SK-N-SH (cell line): ENCODE measurements at regions of chr18 and their contacts with region 1.

Region 1: GRCh38 chr18:32439802-32440201 is 30.9 kb downstream of the GAREM1 start:
- DNase-seq: no peak
- H3K4me3 ChIP-seq: no peak overlapping the region
- H3K27ac ChIP-seq: no peak overlapping the region
- H3K4me1 ChIP-seq: peaks cover 0 to 12% of the 10 kb centered on the region in 2 experiments; a peak in 2 of 4 replicates
- H3K27me3 ChIP-seq: no peaks in the 10 kb centered on the region
- CTCF ChIP-seq: peak; percentile 46; the same call in 1 of the 2 replicates
- EP300 ChIP-seq: no peak
- RAD21 ChIP-seq: peak; percentile 57

Region 2: DNA sequence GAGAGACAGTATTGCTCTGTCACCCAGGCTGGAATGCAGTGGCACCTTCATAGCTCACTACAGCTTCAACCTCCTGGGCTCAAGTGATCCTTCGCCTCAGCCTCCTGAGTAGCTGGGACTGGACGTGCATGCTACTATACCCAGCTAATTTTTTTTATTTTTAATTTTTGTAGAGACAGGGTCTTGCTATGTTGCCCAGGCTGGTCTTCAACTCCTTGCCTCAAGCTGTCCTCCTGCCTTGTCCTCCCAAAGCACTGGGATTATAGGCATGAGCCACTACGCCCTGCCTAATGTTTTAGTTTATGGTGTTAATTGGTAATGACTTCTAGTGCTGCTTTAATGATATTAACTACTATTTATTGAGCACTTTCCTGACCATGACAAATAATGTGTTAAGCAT is 329.8 kb before region 1 on chr18:
- CTCF ChIA-PET with region 1: no interaction called
- POLR2A ChIA-PET with region 1: no interaction called
- DNase-seq: no peak
- H3K4me3 ChIP-seq: no peak overlapping the region
- H3K27ac ChIP-seq: no peak overlapping the region
- H3K4me1 ChIP-seq: no peaks in the 10 kb centered on the region
- H3K27me3 ChIP-seq: no peaks in the 10 kb centered on the region
- CTCF ChIP-seq: no peak
- EP300 ChIP-seq: no peak
- RAD21 ChIP-seq: no peak

Region 3: GRCh38 chr18:32450874-32451273 is 11.1 kb after region 1 on chr18:
- CTCF ChIA-PET with region 1: interaction called, 15 read pairs
- POLR2A ChIA-PET with region 1: no interaction called
- DNase-seq: no peak
- H3K4me3 ChIP-seq: no peak overlapping the region
- H3K27ac ChIP-seq: no peak overlapping the region
- H3K4me1 ChIP-seq: peaks cover 0 to 3% of the 10 kb centered on the region in 2 experiments; a peak in 2 of 4 replicates
- H3K27me3 ChIP-seq: no peaks in the 10 kb centered on the region
- CTCF ChIP-seq: no peak
- EP300 ChIP-seq: no peak
- RAD21 ChIP-seq: no peak

Region 4: DNA sequence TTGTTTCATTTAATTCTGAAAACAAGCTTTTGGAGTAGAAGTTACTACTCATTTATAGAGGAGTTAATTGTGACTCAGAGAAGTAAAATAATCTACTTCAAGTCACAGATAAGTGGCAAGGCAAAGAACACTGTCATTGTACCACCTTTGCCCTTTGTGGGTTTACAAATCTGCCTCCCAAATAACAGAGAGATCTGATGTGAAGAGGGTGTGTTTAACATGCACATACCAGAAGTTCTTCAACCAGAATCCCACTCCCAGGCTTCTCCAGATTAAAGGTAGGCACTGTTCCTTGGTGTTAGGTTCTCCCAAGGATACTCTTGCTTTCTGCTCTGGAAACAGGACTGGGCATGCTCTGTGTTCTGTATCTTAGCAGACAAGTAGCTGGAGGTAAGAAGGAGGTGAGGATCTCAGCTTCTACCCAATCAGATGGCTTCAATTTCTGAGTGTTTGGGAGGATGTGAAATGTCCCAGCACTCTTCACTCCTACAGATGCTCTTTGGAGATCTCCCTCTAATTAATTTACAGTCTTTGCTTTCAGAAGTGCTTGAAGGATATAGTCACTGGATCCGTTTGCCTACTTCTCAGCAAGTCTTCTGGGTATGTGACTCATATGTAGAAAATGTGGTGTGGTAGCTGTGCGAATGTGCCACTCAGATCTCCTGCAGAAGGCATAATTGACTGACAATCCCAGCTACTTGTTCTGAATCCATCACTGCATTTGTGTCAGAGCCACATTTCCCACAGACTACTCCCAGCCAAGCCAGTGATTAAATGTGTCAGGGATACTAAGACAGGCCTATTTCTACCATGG is 221.9 kb after region 1 on chr18:
- CTCF ChIA-PET with region 1: no interaction called
- POLR2A ChIA-PET with region 1: no interaction called
- DNase-seq: no peak
- H3K4me3 ChIP-seq: no peak overlapping the region
- H3K27ac ChIP-seq: no peak overlapping the region
- H3K4me1 ChIP-seq: no peaks in the 10 kb centered on the region
- H3K27me3 ChIP-seq: no peaks in the 10 kb centered on the region
- CTCF ChIP-seq: no peak
- EP300 ChIP-seq: no peak
- RAD21 ChIP-seq: no peak

Region 5: DNA sequence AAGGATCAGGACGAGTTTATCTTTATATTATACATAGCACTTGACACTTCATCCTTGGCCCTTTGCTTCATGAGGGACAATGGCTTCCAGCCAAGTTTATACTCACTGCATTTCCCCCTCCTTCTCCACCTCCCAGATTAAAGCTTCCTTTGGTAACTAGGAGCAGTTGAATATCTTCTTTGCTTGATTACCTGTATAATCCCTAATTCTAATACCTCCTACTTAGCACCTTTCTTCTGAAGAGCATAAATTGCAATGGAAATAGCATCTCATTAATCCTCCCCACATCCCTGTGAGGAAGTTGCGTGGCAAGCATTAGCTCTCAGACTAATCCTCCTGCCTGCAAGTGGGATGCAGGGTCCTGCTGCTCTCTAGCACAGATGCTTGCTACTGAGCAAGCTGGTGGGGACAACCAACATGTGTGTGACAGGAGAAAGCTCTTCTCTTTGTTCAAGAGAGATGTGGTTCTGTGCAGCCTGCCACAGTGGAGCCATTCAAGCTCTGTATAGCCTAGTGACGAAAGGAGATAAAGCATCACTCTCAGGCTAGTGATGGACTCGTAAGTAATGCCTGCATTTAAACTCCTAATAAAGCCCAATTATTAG is 314.0 kb after region 1 on chr18:
- CTCF ChIA-PET with region 1: no interaction called
- POLR2A ChIA-PET with region 1: no interaction called
- DNase-seq: no peak
- H3K4me3 ChIP-seq: no peak overlapping the region
- H3K27ac ChIP-seq: no peak overlapping the region
- H3K4me1 ChIP-seq: no peaks in the 10 kb centered on the region
- H3K27me3 ChIP-seq: no peaks in the 10 kb centered on the region
- CTCF ChIP-seq: no peak
- EP300 ChIP-seq: no peak
- RAD21 ChIP-seq: no peak